Caco-2 (cell line): ENCODE measurements at regions of chr5 and their contacts with region 1.

Region 1: DNA sequence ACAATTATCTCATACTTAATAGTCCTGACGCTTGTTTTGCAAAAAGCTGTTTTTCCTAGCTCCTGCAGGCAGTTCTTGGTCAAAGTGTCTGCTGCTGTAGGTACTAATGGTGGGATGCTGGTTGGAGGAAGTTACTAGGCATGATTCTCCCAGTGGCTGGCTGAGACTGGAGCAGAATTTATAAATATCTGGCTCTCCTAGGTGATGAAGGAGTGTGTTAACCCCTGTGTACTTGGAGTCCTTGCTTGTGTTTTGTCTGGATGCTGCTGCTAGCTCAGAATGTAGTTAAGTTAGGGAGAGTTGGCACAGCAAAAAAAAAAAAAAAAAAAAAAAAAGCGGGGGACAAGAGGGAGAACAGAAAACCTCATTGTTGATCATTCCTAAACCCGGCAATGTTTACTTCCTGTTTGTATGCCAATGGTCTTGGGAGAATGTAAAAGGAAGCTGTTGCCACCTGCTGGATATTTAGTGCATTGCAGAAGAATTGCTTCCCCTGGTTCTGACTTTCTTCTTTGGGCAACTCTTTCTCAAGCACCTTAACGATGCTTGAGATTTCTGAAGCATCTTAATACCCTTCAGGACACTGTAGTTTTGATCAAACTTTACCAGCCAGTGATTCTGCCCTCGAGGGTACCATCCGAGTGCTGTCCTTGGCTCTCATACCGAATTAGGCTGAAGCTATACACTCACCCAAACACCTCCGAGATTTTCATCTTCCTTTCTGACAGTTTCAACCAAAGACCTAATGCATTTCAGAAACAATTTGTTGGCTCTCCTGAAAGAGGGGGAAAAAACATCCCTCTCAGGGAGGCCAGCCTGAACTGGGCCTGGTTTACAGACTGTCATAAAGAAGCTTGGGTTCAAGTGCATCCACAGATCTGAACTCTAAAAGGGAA is 71.7 kb upstream of the WWC1 start:
- DNase-seq: peak; percentile 57 to 70
- H3K4me3 ChIP-seq: no peak overlapping the region
- H3K4me3 Mint-ChIP-seq: no peak overlapping the region
- H3K27ac Mint-ChIP-seq: no peak overlapping the region
- H3K4me1 ChIP-seq: no peaks in the 10 kb centered on the region; the same call in 1 of the 2 replicates
- H3K4me1 Mint-ChIP-seq: no peaks in the 10 kb centered on the region
- H3K27me3 ChIP-seq: 0 out of 2 replicates have a peak, but pooled peaks cover 1% of the 10 kb centered on the region
- H3K27me3 Mint-ChIP-seq: peaks cover 17% of the 10 kb centered on the region
- CTCF ChIP-seq: peak; percentile 75 to 81

Region 2: GRCh38 chr5:167582283-167582682 is 637.5 kb before region 1 on chr5:
- CTCF ChIA-PET with region 1: no interaction called
- POLR2A ChIA-PET with region 1: no interaction called
- intact Hi-C with region 1: loop called (anchors 2 kb)
- DNase-seq: no peak
- H3K4me3 ChIP-seq: no peak overlapping the region
- H3K4me3 Mint-ChIP-seq: no peak overlapping the region
- H3K27ac Mint-ChIP-seq: no peak overlapping the region
- H3K4me1 ChIP-seq: no peaks in the 10 kb centered on the region
- H3K4me1 Mint-ChIP-seq: no peaks in the 10 kb centered on the region
- H3K27me3 ChIP-seq: no peaks in the 10 kb centered on the region
- H3K27me3 Mint-ChIP-seq: peaks cover 26% of the 10 kb centered on the region
- CTCF ChIP-seq: no peak

Region 3: GRCh38 chr5:167723254-167723871 is 496.4 kb before region 1 on chr5:
- CTCF ChIA-PET with region 1: no interaction called
- POLR2A ChIA-PET with region 1: interaction called, 11 read pairs
- intact Hi-C with region 1: loop called (anchors 5 kb)
- DNase-seq: peak; percentile 74 to 81
- H3K4me3 ChIP-seq: no peak overlapping the region
- H3K4me3 Mint-ChIP-seq: no peak overlapping the region
- H3K27ac Mint-ChIP-seq: no peak overlapping the region
- H3K4me1 ChIP-seq: peaks cover 3% of the 10 kb centered on the region; the same call in 1 of the 2 replicates
- H3K4me1 Mint-ChIP-seq: peaks cover 22% of the 10 kb centered on the region
- H3K27me3 ChIP-seq: no peaks in the 10 kb centered on the region
- H3K27me3 Mint-ChIP-seq: no peaks in the 10 kb centered on the region
- CTCF ChIP-seq: peak; percentile 88 to 93

Region 4: DNA sequence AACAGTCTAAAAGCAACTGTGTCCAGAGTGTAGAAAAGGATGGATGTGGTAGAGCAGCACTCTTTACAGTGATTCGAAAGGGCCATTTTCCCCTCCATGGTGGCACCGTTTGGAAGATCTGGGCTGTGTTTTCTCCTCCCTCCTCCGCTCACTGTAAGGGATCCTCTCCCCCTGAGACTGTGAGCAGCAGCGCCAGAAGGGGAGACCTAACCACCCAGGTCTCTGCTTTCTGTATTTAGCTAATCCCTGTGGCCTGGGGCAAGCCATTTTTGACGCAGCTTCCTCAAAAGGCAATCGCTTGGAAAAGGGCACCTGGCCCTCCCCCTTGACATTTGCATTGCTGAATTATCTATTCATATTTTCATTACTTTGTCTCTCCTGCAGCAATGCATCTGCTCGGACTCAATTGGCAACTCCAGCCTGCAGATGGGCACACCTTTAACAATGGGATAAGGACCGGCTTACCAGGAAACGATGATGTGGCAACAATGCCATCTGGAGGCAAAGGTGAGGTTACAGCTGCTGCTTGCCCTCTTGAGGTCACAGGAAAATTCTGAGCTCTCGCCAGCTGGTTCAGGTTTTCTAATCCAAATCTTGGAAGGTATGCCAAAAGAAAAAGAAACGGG is 172.6 kb before region 1 on chr5:
- CTCF ChIA-PET with region 1: interaction called, 5 read pairs
- POLR2A ChIA-PET with region 1: no interaction called
- intact Hi-C with region 1: loop called (anchors 1 kb)
- DNase-seq: peak; percentile 59 to 68
- H3K4me3 ChIP-seq: no peak overlapping the region
- H3K4me3 Mint-ChIP-seq: no peak overlapping the region
- H3K27ac Mint-ChIP-seq: no peak overlapping the region
- H3K4me1 ChIP-seq: no peaks in the 10 kb centered on the region; the same call in 1 of the 2 replicates
- H3K4me1 Mint-ChIP-seq: no peaks in the 10 kb centered on the region
- H3K27me3 ChIP-seq: no peaks in the 10 kb centered on the region
- H3K27me3 Mint-ChIP-seq: peaks cover 21% of the 10 kb centered on the region
- CTCF ChIP-seq: peak; percentile 66 to 71

Region 5: DNA sequence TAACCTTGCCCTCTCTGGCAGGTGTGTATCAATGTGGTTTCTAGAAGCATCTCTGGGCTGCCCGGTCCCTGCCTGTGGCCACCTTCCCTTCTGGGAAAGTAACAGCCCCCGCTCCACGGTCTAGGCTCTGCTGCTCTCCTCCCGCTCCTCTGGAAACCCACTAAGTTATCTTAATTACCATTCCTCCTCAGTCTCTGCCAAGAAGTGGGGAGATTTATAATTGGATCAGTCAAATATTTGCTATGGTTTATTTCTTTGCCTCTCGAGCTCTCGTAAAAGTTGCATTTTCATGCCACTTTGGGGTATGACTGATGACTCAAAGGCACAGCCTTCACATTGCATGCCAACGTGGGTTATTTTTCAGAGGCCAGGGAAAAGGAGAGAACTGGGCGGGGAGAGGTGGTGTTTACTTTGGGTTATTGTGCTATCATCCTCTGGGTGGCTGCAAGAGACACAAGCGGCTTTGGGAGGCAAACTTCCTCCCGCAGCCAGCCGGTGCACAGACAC is 133.6 kb before region 1 on chr5:
- CTCF ChIA-PET with region 1: no interaction called
- POLR2A ChIA-PET with region 1: no interaction called
- intact Hi-C with region 1: loop called (anchors 1 kb)
- DNase-seq: peak; percentile 42 to 45
- H3K4me3 ChIP-seq: no peak overlapping the region
- H3K4me3 Mint-ChIP-seq: no peak overlapping the region
- H3K27ac Mint-ChIP-seq: no peak overlapping the region
- H3K4me1 ChIP-seq: no peaks in the 10 kb centered on the region; the same call in 1 of the 2 replicates
- H3K4me1 Mint-ChIP-seq: peaks cover 11% of the 10 kb centered on the region
- H3K27me3 ChIP-seq: no peaks in the 10 kb centered on the region
- H3K27me3 Mint-ChIP-seq: peaks cover 19% of the 10 kb centered on the region
- CTCF ChIP-seq: peak; percentile 34 to 54

Region 6: GRCh38 chr5:168114444-168115017 is 105.2 kb before region 1 on chr5:
- CTCF ChIA-PET with region 1: interaction called, 11 read pairs
- POLR2A ChIA-PET with region 1: no interaction called
- intact Hi-C with region 1: loop called (anchors 1 kb)
- DNase-seq: peak; percentile 71 to 76
- H3K4me3 ChIP-seq: no peak overlapping the region
- H3K4me3 Mint-ChIP-seq: no peak overlapping the region
- H3K27ac Mint-ChIP-seq: no peak overlapping the region
- H3K4me1 ChIP-seq: no peaks in the 10 kb centered on the region
- H3K4me1 Mint-ChIP-seq: no peaks in the 10 kb centered on the region
- H3K27me3 ChIP-seq: no peaks in the 10 kb centered on the region
- H3K27me3 Mint-ChIP-seq: peaks cover 19% of the 10 kb centered on the region
- CTCF ChIP-seq: peak; percentile 72 to 83

Region 7: GRCh38 chr5:168159425-168159824 is 60.3 kb before region 1 on chr5:
- CTCF ChIA-PET with region 1: no interaction called
- POLR2A ChIA-PET with region 1: no interaction called
- intact Hi-C with region 1: no loop called
- DNase-seq: peak in 1 of 2 experiments; percentile 6
- H3K4me3 ChIP-seq: no peak overlapping the region
- H3K4me3 Mint-ChIP-seq: no peak overlapping the region
- H3K27ac Mint-ChIP-seq: no peak overlapping the region
- H3K4me1 ChIP-seq: no peaks in the 10 kb centered on the region
- H3K4me1 Mint-ChIP-seq: no peaks in the 10 kb centered on the region
- H3K27me3 ChIP-seq: no peaks in the 10 kb centered on the region
- H3K27me3 Mint-ChIP-seq: peaks cover 19% of the 10 kb centered on the region
- CTCF ChIP-seq: no peak

Region 8: DNA sequence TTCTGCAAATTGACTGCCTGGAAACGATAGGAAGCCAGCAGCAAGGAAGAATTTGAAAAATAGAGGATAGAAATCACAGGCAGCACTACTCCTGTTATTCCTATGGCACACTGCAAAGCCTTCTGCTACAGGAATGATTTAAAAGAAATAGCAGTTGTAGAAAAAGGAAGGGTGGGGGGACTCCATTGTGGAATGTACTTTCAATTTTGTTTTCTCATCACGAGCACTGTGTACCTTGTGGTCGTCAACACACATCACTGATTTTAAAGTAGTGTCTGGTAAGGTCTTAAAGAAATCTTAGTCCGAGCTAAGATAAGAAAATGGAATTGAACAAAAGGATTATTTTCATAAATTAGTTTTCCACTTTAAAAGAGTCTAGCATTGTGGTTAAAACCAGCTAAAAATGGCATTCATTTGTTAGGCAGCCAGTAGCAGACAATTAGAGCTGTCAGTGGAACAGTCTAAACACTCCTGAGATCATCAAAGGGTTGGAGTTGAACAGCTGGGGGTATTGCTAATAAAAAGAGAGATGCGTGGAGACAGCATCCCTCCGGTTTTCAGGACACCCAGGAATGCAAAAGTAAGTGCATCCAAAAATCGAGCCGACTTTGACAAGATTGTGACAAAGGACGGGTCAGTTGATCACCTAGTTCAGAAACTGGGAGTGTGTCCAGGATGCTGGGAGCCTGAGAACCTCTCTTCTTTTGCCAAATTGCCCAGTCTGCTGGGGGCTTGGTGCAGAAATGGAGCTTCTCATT is 26.1 kb before region 1 on chr5:
- CTCF ChIA-PET with region 1: no interaction called
- POLR2A ChIA-PET with region 1: no interaction called
- intact Hi-C with region 1: no loop called
- DNase-seq: no peak
- H3K4me3 ChIP-seq: no peak overlapping the region
- H3K4me3 Mint-ChIP-seq: no peak overlapping the region
- H3K27ac Mint-ChIP-seq: no peak overlapping the region
- H3K4me1 ChIP-seq: no peaks in the 10 kb centered on the region
- H3K4me1 Mint-ChIP-seq: no peaks in the 10 kb centered on the region
- H3K27me3 ChIP-seq: peaks cover 1% of the 10 kb centered on the region
- H3K27me3 Mint-ChIP-seq: peaks cover 23% of the 10 kb centered on the region
- CTCF ChIP-seq: no peak